Naive thymus-derived CD4-positive, alpha-beta T cell (primary cell): ENCODE measurements at regions of chr1 and their contacts with region 1.

Region 1: GRCh38 chr1:44799770-44800584 is at the start of gene PLK3:
- DNase-seq: peak; percentile 93 to 99 (median 98)
- ATAC-seq: peak; percentile 92
- H3K4me3 ChIP-seq: peak within 1 kb of the TSS; percentile 66
- H3K4me3 Mint-ChIP-seq: peak within 1 kb of the TSS; percentile 85 to 98 (median 93)
- H3K27ac ChIP-seq: peak within 1 kb of the TSS; percentile 94
- H3K27ac Mint-ChIP-seq: peak within 1 kb of the TSS; percentile 84 to 99 (median 98)
- H3K4me1 ChIP-seq: peaks cover 17 to 24% of the 10 kb centered on the region in 2 donors
- H3K4me1 Mint-ChIP-seq: peaks cover 19 to 43% (median 33%) of the 10 kb centered on the region in 7 donors
- H3K27me3 ChIP-seq: no peaks in the 10 kb centered on the region
- H3K27me3 Mint-ChIP-seq: no peaks in the 10 kb centered on the region
- total RNA-seq, gene PLK3: 92.8 to 456 (median 142) TPM

Region 2: DNA sequence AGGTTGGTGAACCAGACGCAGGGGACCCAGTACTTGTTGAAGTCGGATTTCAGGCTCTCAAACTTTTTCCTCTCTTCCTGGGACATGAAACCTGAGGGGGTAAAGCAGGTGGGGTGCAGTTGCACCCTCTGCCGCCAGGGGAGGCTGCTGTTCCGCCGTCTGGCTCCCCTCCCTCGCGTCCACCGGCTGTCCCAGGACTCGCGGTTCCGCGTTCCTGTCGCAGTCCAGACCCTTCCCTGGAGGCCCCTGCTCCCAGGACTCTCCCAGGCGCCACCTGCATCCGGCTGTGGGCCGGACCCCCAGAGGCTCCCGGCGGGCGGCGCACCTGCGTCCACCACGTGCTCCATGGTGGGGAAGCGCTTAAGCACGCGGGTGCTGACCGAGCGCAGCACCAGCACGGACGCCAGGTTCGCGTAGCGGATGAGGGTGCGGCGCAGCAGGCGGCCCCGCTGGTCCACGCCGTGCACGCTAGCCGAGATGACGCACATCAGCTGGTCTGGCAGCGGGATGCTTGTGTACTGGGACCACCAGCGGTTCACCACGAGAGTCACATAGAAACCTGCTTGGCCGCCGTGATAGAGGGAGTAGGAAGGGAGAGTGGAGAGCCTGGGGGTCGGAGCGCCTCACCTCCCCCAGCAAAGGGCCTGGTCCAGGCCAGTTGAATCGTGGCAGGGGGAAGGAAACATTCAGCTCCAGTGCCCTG is 13.7 kb before region 1 on chr1:
- CTCF ChIA-PET with region 1: interaction called, 6 read pairs
- POLR2A ChIA-PET with region 1: interaction called, 18 read pairs
- intact Hi-C with region 1: no loop called
- DNase-seq: peak; percentile 69 to 85 (median 76)
- ATAC-seq: peak; percentile 90
- H3K4me3 ChIP-seq: peak overlapping the region; percentile 64
- H3K4me3 Mint-ChIP-seq: peak overlapping the region; percentile 60 to 82 (median 75)
- H3K27ac ChIP-seq: peak overlapping the region; percentile 58
- H3K27ac Mint-ChIP-seq: peak overlapping the region in 8 of 9 donors; percentile 51 to 80 (median 72)
- H3K4me1 ChIP-seq: peaks cover 20 to 25% of the 10 kb centered on the region in 2 donors
- H3K4me1 Mint-ChIP-seq: peaks cover 13 to 35% (median 27%) of the 10 kb centered on the region in 7 donors
- H3K27me3 ChIP-seq: no peaks in the 10 kb centered on the region
- H3K27me3 Mint-ChIP-seq: no peaks in the 10 kb centered on the region

Region 3: GRCh38 chr1:44819608-44820327 is 19.8 kb after region 1 on chr1:
- CTCF ChIA-PET with region 1: interaction called, 44 read pairs
- POLR2A ChIA-PET with region 1: interaction called, 709 read pairs
- intact Hi-C with region 1: loop called (anchors 1 kb)
- DNase-seq: peak; percentile 75 to 91 (median 86)
- ATAC-seq: peak; percentile 86
- H3K4me3 ChIP-seq: peak overlapping the region; percentile 66
- H3K4me3 Mint-ChIP-seq: peak overlapping the region; percentile 91 to 96 (median 94)
- H3K27ac ChIP-seq: peak overlapping the region; percentile 92
- H3K27ac Mint-ChIP-seq: peak overlapping the region; percentile 99 to 100 (median 100)
- H3K4me1 ChIP-seq: peaks cover 0 to 21% of the 10 kb centered on the region in 2 donors
- H3K4me1 Mint-ChIP-seq: peaks cover 31 to 48% (median 45%) of the 10 kb centered on the region in 7 donors
- H3K27me3 ChIP-seq: no peaks in the 10 kb centered on the region
- H3K27me3 Mint-ChIP-seq: no peaks in the 10 kb centered on the region

Region 4: GRCh38 chr1:44835738-44836675 is 36.0 kb after region 1 on chr1:
- CTCF ChIA-PET with region 1: interaction called, 11 read pairs
- POLR2A ChIA-PET with region 1: interaction called, 709 read pairs
- intact Hi-C with region 1: loop called in 1 of 2 experiments (anchors 2 kb)
- DNase-seq: peak; percentile 58 to 82 (median 75)
- ATAC-seq: peak; percentile 96
- H3K4me3 ChIP-seq: no peak overlapping the region
- H3K4me3 Mint-ChIP-seq: peak overlapping the region in 9 of 10 donors; percentile 3 to 73 (median 42)
- H3K27ac ChIP-seq: no peak overlapping the region
- H3K27ac Mint-ChIP-seq: peak overlapping the region in 8 of 9 donors; percentile 12 to 81 (median 41)
- H3K4me1 ChIP-seq: no peaks in the 10 kb centered on the region
- H3K4me1 Mint-ChIP-seq: peaks cover 7 to 19% (median 8%) of the 10 kb centered on the region in 7 donors
- H3K27me3 ChIP-seq: no peaks in the 10 kb centered on the region
- H3K27me3 Mint-ChIP-seq: peaks cover under 1 to 9% (median under 1%) of the 10 kb centered on the region in 5 donors

Region 5: GRCh38 chr1:45205910-45206721 is 406.1 kb after region 1 on chr1 and contains the start of gene ZSWIM5:
- CTCF ChIA-PET with region 1: no interaction called
- POLR2A ChIA-PET with region 1: no interaction called
- intact Hi-C with region 1: loop called in 1 of 2 experiments (anchors 10 kb)
- DNase-seq: peak; percentile 53 to 74 (median 66)
- ATAC-seq: peak; percentile 88
- H3K4me3 ChIP-seq: peak within 1 kb of the TSS; percentile 77
- H3K4me3 Mint-ChIP-seq: peak within 1 kb of the TSS; percentile 84 to 100 (median 94)
- H3K27ac ChIP-seq: peak within 1 kb of the TSS; percentile 50
- H3K27ac Mint-ChIP-seq: peak within 1 kb of the TSS; percentile 66 to 94 (median 83)
- H3K4me1 ChIP-seq: peaks cover 11 to 18% of the 10 kb centered on the region in 2 donors
- H3K4me1 Mint-ChIP-seq: peaks cover 13 to 41% (median 27%) of the 10 kb centered on the region in 7 donors
- H3K27me3 ChIP-seq: no peaks in the 10 kb centered on the region
- H3K27me3 Mint-ChIP-seq: peaks cover 0 to 56% (median 0%) of the 10 kb centered on the region in 5 donors
- total RNA-seq, gene ZSWIM5: 0.17 to 3.6 (median 2.3) TPM